ENCODE measurements at regions of chrX and their contacts with region 1.

Region 1: DNA sequence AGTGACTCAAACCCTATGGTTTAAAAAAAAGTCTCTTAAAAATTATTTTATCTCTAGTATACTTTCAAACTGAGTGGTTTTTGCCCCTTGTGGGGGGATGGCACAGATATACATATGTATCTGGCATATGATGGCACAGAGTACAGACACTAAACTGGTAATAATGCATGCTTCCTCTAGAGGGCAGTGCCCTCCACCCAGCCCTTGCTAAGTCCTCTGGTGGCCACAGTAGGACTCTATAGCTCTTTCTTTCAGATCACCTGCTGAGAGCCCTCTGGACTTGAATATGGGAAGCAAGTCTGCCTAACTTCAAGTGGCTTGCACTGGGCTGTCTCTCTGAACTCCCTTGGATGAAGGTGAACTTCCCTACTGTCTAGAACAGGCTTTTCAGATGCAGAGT is 66.3 kb downstream of the TSPAN7 start:
- DNase-seq: peak; percentile 38 to 68 (median 56)
- ATAC-seq: peak; percentile 100
- H3K4me3 ChIP-seq: no peak overlapping the region
- H3K27ac ChIP-seq: no peak overlapping the region
- H3K4me1 ChIP-seq: no peaks in the 10 kb centered on the region; a peak in 1 of 5 replicates
- H3K27me3 ChIP-seq: no peaks in the 10 kb centered on the region
- CTCF ChIP-seq: peak; percentile 81 to 99 (median 97)
- EP300 ChIP-seq: no peak
- POLR2A ChIP-seq: no peak
- RAD21 ChIP-seq: peak; percentile 60 to 74; a peak in 3 of 4 replicates

Region 2: GRCh38 chrX:38561126-38561868 is 66.4 kb before region 1 on chrX and contains the start of gene TSPAN7:
- CTCF ChIA-PET with region 1: no interaction called
- POLR2A ChIA-PET with region 1: no interaction called
- in situ Hi-C with region 1: no loop called
- intact Hi-C with region 1: no loop called
- DNase-seq: peak; percentile 87 to 92 (median 88)
- ATAC-seq: peak; percentile 99
- H3K4me3 ChIP-seq: peak within 1 kb of the TSS; percentile 16
- H3K27ac ChIP-seq: no peak within 1 kb of the TSS
- H3K4me1 ChIP-seq: peaks cover 0 to 15% of the 10 kb centered on the region in 2 experiments; a peak in 3 of 5 replicates
- H3K27me3 ChIP-seq: peaks cover 0 to 6% of the 10 kb centered on the region in 2 experiments; a peak in 2 of 5 replicates
- CTCF ChIP-seq: no peak
- EP300 ChIP-seq: no peak
- POLR2A ChIP-seq: no peak
- RAD21 ChIP-seq: no peak
- polyA plus RNA-seq, gene TSPAN7: 0.28 to 0.29 TPM

Region 3: GRCh38 chrX:38664285-38664684 is 36.6 kb after region 1 on chrX:
- CTCF ChIA-PET with region 1: no interaction called
- POLR2A ChIA-PET with region 1: no interaction called
- in situ Hi-C with region 1: no loop called
- intact Hi-C with region 1: loop called (anchors 5 kb)
- DNase-seq: peak; percentile 33 to 64 (median 38)
- ATAC-seq: peak; percentile 84
- H3K4me3 ChIP-seq: no peak overlapping the region
- H3K27ac ChIP-seq: no peak overlapping the region
- H3K4me1 ChIP-seq: peaks cover 0 to 7% of the 10 kb centered on the region in 2 experiments; a peak in 2 of 5 replicates
- H3K27me3 ChIP-seq: no peaks in the 10 kb centered on the region
- CTCF ChIP-seq: peak; percentile 52 to 59 (median 55); a peak in 5 of 6 replicates
- EP300 ChIP-seq: no peak
- POLR2A ChIP-seq: no peak
- RAD21 ChIP-seq: peak; percentile 63 to 74

Region 4: DNA sequence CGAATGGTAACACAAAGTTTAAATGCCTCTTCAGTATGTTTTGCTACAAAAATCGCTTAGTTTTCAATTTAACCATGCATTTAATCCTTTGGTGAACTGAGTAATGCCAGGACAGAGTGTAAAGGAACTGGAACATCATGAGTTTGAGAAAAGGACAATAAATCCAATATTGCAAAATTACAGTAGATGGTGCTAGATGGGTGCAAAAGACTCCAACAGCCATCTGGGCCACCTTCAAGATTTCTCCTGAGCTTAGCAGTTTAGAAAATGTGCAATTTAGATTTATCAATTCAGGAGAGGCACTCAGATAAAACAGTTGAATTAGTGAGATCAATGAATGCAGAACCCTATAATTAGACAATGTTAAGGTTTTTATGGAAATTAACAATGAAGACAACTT is 140.4 kb after region 1 on chrX:
- CTCF ChIA-PET with region 1: no interaction called
- POLR2A ChIA-PET with region 1: no interaction called
- in situ Hi-C with region 1: no loop called
- intact Hi-C with region 1: no loop called
- DNase-seq: peak in 1 of 4 experiments; percentile 23
- ATAC-seq: 0 out of 3 replicates have a peak, but pooled peaks have one; percentile 17
- H3K4me3 ChIP-seq: no peak overlapping the region
- H3K27ac ChIP-seq: no peak overlapping the region
- H3K4me1 ChIP-seq: peaks cover 0 to 5% of the 10 kb centered on the region in 2 experiments; a peak in 2 of 5 replicates
- H3K27me3 ChIP-seq: no peaks in the 10 kb centered on the region
- CTCF ChIP-seq: peak; percentile 38 to 62 (median 46); a peak in 4 of 6 replicates
- EP300 ChIP-seq: no peak
- POLR2A ChIP-seq: no peak
- RAD21 ChIP-seq: peak; percentile 51 to 71

Measured in K562 (cell line).